ENCODE measurements at regions of chr16 and their contacts with region 1.

Region 1: GRCh38 chr16:53714205-53715022 is 10.5 kb downstream of the FTO start:
- DNase-seq: no peak
- ATAC-seq: no peak

Region 2: DNA sequence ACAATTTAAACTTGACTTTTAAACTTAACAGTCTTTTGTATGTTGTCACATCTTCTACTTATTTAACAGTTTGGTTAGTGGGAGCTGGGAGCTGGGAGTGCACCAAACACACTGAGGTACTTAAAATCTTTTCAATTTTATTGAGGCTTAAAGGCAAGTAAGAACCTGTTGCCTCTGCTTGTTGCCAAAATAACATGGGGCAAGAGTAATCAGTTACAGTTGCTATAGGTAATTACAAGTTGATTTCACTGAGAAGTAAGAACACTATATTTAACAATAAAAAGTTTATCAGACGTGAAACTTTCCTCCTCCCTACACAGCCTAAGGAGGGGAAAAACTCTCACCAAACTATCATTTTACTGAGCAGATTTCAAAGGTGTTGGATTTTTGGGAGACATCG is 124.7 kb after region 1 on chr16:
- intact Hi-C with region 1: loop called in 1 of 2 experiments (anchors 10 kb)
- DNase-seq: no peak
- ATAC-seq: no peak

Measured in left colon (tissue), 2 donors.